RWPE1 (cell line): ENCODE measurements at regions of chr13 and their contacts with region 1.

Region 1: GRCh38 chr13:103759361-103759760 is 693.1 kb upstream of the SLC10A2 start:
- DNase-seq: no peak
- H3K27ac ChIP-seq: no peak overlapping the region
- CTCF ChIP-seq: no peak

Region 2: DNA sequence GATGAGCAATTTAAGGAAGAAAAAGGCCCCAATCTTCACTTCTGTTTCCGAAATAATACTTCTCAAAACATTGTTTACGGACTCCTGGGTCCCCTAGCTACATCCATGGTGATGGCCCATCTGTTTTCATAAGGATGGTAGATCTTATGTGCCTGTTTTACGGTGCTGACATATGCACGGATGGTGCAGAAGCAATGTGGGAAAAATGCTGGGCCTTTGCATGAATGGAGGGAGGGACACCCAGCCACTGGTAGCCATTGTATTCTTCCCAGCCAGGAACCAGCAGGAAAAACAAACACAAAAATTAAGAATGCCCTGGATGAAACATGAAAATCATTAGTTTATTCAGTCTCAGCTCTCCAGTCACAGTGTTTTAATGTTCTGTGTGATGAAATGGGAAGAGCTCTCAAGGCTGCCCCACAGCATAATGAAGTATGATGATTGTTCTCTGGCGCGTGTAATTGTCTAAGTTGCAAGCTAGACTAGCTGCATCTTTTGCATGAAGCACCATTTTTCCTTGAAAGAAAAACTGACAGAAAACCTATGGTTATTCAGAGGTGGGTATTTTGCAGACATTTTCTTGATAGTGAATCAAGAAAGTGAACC is 507.9 kb after region 1 on chr13:
- CTCF ChIA-PET with region 1: interaction called, 14 read pairs
- POLR2A ChIA-PET with region 1: no interaction called
- DNase-seq: no peak
- H3K27ac ChIP-seq: no peak overlapping the region
- CTCF ChIP-seq: no peak